Dendritic cell treated with granulocyte-macrophage colony-stimulating factor and Interleukin-4, amounts not matched to agents 40 ng/mL and 50 ng/mL, for 4 days (primary cell): ENCODE measurements at regions of chr19 and their contacts with region 1.

Region 1: DNA sequence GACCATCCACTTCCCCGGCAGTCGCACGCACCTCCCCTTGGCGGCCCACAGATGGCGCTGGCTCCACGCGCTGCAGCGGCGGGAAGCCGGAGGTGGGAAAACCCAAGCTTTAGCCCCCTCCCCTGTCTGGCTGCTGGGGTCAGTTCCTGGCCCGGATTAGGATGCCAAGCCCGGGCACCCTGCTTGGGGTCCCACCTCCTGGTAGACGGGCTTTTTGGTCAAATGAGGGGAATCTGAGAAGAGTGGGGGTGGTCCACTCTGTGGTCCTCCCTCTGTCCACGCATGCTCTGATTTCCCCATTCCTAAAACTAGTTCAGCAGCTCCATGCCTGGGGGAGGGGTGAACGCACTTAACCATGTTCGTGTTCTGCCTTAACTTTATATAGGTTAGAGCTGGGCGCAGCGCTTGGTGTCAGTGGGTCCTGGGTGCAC is 8.1 kb upstream of the ADGRE2 start:
- H3K4me3 Mint-ChIP-seq: peak overlapping the region; percentile 48
- H3K27ac Mint-ChIP-seq: peak overlapping the region; percentile 97
- H3K4me1 Mint-ChIP-seq: peaks cover 43% of the 10 kb centered on the region
- H3K27me3 Mint-ChIP-seq: no peaks in the 10 kb centered on the region

Region 2: DNA sequence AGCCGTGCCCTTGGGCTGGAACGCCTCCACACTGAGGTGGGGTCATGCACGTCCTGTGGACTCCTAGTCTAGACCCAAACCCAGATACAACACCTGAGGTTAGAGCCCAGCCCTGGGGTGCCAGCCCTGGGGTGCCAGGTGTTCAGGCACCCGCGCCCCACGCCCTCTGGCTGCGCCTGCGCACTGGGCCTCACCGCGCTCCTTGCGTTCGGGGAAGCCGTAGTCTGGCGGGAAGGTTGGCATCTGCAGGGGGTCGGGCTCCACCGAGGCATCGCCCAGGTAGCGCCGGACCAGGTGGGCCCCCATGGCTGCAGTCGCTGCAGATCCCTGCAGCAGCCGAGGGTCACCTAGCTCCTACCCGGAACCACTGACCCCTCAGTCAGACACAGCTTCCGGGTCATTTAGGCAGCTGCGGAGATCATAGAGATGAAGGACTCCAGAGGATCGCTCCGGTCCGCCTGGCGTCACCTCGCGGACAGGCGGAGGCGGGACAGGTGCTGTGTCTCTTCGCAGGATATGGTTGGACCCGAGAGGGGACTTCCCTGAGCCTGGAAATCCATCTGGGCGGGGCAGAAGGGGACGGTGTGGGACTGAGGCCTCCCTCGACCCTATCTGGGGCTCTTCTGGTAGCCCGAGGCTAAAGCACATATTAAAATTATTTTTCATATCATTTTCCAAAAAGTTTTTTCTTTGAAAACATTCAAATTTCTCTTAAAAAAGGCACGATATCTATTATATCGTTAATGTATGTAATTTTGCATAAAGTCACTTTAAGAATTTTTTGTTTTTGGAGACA is 214.5 kb before region 1 on chr19 and contains the start of gene NDUFB7:
- intact Hi-C with region 1: loop called (anchors 10 kb)
- H3K4me3 Mint-ChIP-seq: peak within 1 kb of the TSS; percentile 97
- H3K27ac Mint-ChIP-seq: peak within 1 kb of the TSS; percentile 94
- H3K4me1 Mint-ChIP-seq: peaks cover 66% of the 10 kb centered on the region
- H3K27me3 Mint-ChIP-seq: no peaks in the 10 kb centered on the region

Region 3: GRCh38 chr19:14848822-14849221 is 62.4 kb after region 1 on chr19 and contains the start of gene OR7A10:
- intact Hi-C with region 1: no loop called
- H3K4me3 Mint-ChIP-seq: no peak within 1 kb of the TSS
- H3K27ac Mint-ChIP-seq: no peak within 1 kb of the TSS
- H3K4me1 Mint-ChIP-seq: no peaks in the 10 kb centered on the region
- H3K27me3 Mint-ChIP-seq: peaks cover 5% of the 10 kb centered on the region

Region 4: DNA sequence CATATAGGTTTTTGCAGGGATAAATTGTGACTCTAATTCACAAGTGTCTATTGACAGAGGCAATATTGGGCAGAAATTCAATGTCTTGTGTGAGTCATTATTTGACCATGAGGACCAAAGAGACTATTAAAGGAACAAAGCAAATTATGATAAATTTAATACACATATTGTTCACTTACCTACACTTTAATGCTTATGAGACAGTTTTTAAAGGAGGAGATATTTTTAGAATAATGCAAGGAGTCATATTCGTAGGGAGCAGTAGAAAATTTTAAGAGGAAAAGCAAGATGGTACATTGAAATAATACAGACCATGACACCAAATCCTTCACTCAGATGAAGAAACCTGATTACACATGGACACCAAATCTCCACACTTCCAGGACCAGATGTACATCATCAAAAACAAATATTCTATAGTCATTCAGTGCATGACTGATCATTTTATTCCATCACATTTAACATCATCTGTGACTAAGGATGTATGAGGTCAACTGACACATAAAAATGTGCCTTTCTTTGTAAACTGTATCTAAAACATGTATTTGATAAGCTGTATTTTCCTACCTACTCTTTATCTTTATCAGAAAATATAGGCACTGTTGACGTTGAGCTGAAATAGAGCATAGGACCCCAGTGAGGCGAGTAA is 103.7 kb after region 1 on chr19:
- intact Hi-C with region 1: loop called (anchors 2 kb)
- H3K4me3 Mint-ChIP-seq: no peak overlapping the region
- H3K27ac Mint-ChIP-seq: no peak overlapping the region
- H3K4me1 Mint-ChIP-seq: peaks cover 24% of the 10 kb centered on the region
- H3K27me3 Mint-ChIP-seq: peaks cover 28% of the 10 kb centered on the region

Region 5: DNA sequence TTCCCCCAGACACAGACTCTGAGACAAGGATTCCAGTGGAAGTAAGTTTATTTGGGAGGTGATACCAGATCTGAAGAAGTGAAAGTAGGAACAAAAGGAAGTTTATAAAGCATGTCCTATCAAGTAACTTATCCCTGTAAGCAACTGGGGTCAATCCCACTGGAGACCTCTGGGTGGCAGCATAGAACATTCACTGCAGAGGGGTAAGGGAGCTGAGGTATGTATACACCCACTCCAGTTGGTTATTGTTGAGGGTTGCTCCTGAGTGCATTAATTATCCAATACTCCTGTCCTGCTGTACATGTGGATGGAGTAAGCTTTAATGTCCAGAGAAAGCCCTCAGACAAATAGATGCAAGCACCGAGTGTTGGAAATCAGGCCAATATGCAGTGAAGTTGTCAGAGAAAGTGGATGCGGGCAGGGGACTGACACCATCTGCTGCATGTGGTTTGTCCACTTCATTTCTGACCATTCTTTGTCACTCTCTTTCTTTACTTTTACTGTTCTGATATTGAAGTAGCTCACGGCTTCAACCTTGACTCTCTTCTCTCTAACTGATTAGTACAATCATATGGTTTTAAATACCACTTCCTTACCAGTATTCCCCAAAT is 367.7 kb after region 1 on chr19:
- intact Hi-C with region 1: loop called (anchors 5 kb)
- H3K4me3 Mint-ChIP-seq: no peak overlapping the region
- H3K27ac Mint-ChIP-seq: no peak overlapping the region
- H3K4me1 Mint-ChIP-seq: peaks cover 20% of the 10 kb centered on the region
- H3K27me3 Mint-ChIP-seq: peaks cover 4% of the 10 kb centered on the region